ENCODE measurements at regions of chr9 and their contacts with region 1.

Region 1: GRCh38 chr9:108786901-108787689 is 68.7 kb downstream of the ACTL7B start:
- DNase-seq: no peak
- ATAC-seq: no peak
- H3K4me3 ChIP-seq: no peak overlapping the region
- H3K27ac ChIP-seq: no peak overlapping the region
- H3K4me1 ChIP-seq: no peaks in the 10 kb centered on the region
- H3K27me3 ChIP-seq: peaks cover 2% of the 10 kb centered on the region in 2 experiments; a peak in 1 of 4 replicates
- CTCF ChIP-seq: no peak
- EP300 ChIP-seq: no peak
- POLR2A ChIP-seq: no peak
- RAD21 ChIP-seq: no peak

Region 2: GRCh38 chr9:108842610-108843295 is 55.7 kb after region 1 on chr9:
- CTCF ChIA-PET with region 1: no interaction called
- POLR2A ChIA-PET with region 1: no interaction called
- RAD21 ChIA-PET with region 1: no interaction called
- SMC1A ChIA-PET with region 1: no interaction called
- in situ Hi-C with region 1: no loop called
- intact Hi-C with region 1: loop called (anchors 10 kb)
- DNase-seq: no peak
- ATAC-seq: no peak
- H3K4me3 ChIP-seq: no peak overlapping the region
- H3K27ac ChIP-seq: no peak overlapping the region
- H3K4me1 ChIP-seq: no peaks in the 10 kb centered on the region
- H3K27me3 ChIP-seq: no peaks in the 10 kb centered on the region
- CTCF ChIP-seq: no peak
- EP300 ChIP-seq: no peak
- POLR2A ChIP-seq: no peak
- RAD21 ChIP-seq: no peak